Activated B cell treated with CpG ODN at 0.5 μM for 24 hours (primary cell): ENCODE measurements at regions of chr2 and their contacts with region 1.

Region 1: DNA sequence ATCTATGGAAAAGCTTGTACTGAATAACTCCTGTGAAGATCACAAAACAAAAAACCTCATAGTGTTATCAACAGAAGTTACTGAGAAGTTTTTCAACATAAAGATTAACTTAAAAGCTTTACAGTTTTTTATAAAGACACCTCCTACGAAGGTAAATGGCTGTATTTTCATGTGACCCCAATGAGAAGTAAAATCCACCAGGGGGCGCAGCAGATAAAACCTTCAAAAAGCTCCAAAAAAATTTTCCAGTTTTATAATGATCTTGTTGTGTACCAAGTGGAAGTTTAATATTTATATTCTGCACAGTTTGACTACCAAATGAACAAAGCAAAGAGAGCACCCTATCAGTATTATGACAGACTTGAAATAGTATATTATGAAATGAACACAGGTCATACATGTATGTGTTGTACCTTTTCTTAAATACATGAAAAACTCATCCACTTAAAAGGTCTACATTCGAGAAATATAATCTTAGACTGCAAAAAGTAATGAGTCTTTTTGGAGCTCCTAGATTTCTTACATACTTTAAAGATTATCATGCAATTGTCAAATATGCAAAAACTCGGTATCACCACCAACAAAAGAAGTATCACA is 38.5 kb downstream of the PNO1 start:
- DNase-seq: no peak
- ATAC-seq: peak; percentile 37
- H3K4me3 Mint-ChIP-seq: no peak overlapping the region
- H3K27ac Mint-ChIP-seq: peak overlapping the region; percentile 41
- H3K4me1 Mint-ChIP-seq: peaks cover 58% of the 10 kb centered on the region
- H3K27me3 Mint-ChIP-seq: no peaks in the 10 kb centered on the region
- CTCF ChIP-seq: peak; percentile 36

Region 2: DNA sequence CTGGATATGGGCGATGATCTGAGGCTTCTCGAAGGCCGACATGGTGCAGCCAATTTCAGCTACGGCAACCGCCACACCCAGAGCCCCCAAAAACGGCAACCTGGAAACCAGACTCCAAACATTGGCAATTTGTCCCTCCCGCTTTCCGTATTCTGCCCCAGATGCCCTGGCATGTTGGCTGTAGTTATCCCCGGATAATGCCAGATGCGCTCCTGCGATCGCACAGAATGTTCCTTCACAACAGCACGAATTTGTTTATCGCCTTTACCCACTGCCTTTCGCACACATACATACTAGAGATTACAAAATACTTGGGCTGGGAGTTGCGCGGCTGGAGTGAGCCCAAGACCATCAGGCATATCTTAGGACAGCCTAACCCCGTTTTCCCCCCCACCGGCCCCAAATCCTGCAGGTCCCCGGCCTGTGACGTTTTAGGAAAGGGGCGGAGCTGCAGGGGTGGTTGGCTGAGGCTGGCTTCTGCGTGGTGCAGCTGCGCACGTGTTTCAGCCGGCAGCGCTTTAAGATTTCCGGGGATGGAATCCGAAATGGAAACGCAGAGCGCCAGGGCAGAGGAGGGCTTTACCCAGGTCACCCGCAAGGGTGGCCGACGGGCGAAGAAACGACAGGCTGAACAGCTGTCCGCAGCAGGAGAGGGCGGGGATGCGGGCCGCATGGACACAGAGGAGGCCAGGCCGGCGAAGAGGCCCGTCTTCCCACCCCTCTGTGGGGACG is 38.6 kb before region 1 on chr2 and contains the start of gene PNO1:
- CTCF ChIA-PET with region 1: interaction called, 3 read pairs
- POLR2A ChIA-PET with region 1: no interaction called
- intact Hi-C with region 1: loop called (anchors 1 kb)
- DNase-seq: peak; percentile 94
- ATAC-seq: peak; percentile 95
- H3K4me3 Mint-ChIP-seq: peak within 1 kb of the TSS; percentile 99
- H3K27ac Mint-ChIP-seq: peak within 1 kb of the TSS; percentile 100
- H3K4me1 Mint-ChIP-seq: peaks cover 55% of the 10 kb centered on the region
- H3K27me3 Mint-ChIP-seq: no peaks in the 10 kb centered on the region
- CTCF ChIP-seq: no peak
- total RNA-seq, gene PNO1: 22.1 and 24.9 TPM in 2 replicates

Region 3: DNA sequence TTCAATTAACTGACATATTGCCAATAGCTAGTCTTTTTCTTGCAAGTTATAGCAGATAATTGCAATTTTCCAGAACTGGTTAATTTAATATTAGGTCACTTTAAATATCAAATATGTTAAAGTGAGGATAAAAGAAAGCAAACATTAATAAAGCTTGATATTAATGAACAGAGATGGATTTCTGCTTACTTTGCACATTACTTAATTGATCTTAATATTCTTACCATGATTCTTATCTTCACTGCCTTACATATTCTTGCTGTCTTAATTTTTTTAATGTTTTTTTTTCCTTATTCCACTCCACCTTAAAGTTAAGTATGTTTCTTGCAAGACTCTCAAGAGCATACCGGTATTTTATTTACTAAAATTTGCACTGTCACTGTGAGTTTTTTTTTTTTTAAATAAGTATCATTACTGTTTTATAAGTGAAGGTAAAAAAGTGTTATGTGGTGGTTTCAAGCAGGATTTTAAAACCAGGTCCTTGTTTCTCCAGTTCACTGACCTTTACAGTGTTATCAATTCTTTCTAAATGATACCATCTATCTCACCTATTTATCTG is 22.2 kb after region 1 on chr2:
- CTCF ChIA-PET with region 1: interaction called, 12 read pairs
- POLR2A ChIA-PET with region 1: no interaction called
- intact Hi-C with region 1: no loop called
- DNase-seq: no peak
- ATAC-seq: no peak
- H3K4me3 Mint-ChIP-seq: peak overlapping the region; percentile 17
- H3K27ac Mint-ChIP-seq: peak overlapping the region; percentile 37
- H3K4me1 Mint-ChIP-seq: peaks cover 86% of the 10 kb centered on the region
- H3K27me3 Mint-ChIP-seq: no peaks in the 10 kb centered on the region
- CTCF ChIP-seq: no peak

Region 4: DNA sequence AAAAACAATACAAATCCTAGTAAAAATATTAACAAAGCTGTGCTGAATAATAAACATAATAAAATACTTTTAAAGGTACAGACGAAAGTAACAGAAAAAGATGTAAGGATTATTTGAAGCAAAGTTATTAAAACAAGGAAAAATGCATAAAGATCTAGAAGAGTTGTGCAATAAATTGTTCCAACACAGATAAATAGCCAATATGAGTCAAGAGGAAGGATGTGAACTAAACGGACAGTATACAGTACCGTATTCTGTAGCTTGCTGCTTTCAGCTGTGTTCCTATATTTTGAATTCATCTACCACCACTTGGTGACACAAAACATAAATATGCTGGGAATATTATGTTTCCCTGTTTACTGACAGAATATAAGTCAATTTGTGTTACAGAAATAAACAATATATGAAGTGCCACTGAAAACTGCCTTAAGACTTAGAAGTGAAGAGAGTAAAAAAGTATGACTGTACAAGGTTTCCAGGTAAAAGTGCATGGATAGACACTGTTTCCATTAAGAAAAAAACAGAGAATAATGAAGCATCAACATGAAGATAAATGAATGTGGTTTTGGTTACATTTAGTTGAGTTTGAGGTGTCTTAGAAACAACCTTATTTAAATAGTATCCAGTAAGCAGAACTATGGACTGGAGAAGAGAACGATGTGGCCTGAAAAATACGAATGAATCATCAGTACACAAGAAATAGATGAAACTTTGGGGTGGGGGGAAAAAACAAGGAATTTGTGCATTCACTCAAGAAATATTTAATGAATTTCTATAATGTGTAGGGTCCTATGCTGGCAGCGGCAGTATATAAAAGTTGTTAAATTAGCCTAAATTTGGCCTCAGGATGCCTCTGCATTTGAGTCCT is 43.0 kb after region 1 on chr2:
- CTCF ChIA-PET with region 1: interaction called, 11 read pairs
- POLR2A ChIA-PET with region 1: no interaction called
- intact Hi-C with region 1: no loop called
- DNase-seq: no peak
- ATAC-seq: no peak
- H3K4me3 Mint-ChIP-seq: peak overlapping the region; percentile 39
- H3K27ac Mint-ChIP-seq: peak overlapping the region; percentile 2
- H3K4me1 Mint-ChIP-seq: peaks cover 80% of the 10 kb centered on the region
- H3K27me3 Mint-ChIP-seq: no peaks in the 10 kb centered on the region
- CTCF ChIP-seq: no peak

Region 5: GRCh38 chr2:68251187-68251854 is 55.1 kb after region 1 on chr2:
- CTCF ChIA-PET with region 1: interaction called, 23 read pairs
- POLR2A ChIA-PET with region 1: interaction called, 22 read pairs
- intact Hi-C with region 1: loop called (anchors 1 kb)
- DNase-seq: peak; percentile 41
- ATAC-seq: peak; percentile 66
- H3K4me3 Mint-ChIP-seq: peak overlapping the region; percentile 89
- H3K27ac Mint-ChIP-seq: peak overlapping the region; percentile 92
- H3K4me1 Mint-ChIP-seq: peaks cover 35% of the 10 kb centered on the region
- H3K27me3 Mint-ChIP-seq: no peaks in the 10 kb centered on the region
- CTCF ChIP-seq: no peak

Region 6: DNA sequence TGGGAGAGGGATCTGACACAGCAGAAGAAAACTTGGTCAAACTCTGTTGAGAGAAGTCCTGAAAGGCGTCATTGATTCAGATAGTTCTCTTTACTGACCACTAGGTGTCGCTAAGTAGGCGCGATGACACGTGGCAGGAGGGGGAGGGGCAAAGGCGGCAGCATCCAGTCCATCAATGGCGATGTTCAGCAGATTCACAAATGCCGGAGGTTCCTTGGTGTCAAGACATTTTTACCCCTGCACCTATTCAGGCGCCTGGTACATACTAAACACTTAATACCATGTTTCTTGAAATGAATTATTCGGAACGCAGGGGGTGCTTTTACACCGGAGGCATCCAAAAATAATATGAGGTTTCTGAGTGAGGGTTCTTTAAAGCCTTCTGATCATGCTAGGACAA is 165.9 kb after region 1 on chr2:
- CTCF ChIA-PET with region 1: interaction called, 4 read pairs
- POLR2A ChIA-PET with region 1: interaction called, 3 read pairs
- intact Hi-C with region 1: loop called (anchors 1 kb)
- DNase-seq: peak; percentile 63
- ATAC-seq: peak; percentile 66
- H3K4me3 Mint-ChIP-seq: peak overlapping the region; percentile 84
- H3K27ac Mint-ChIP-seq: peak overlapping the region; percentile 91
- H3K4me1 Mint-ChIP-seq: peaks cover 56% of the 10 kb centered on the region
- H3K27me3 Mint-ChIP-seq: no peaks in the 10 kb centered on the region
- CTCF ChIP-seq: peak; percentile 33